GM10248 (cell line): ENCODE measurements at regions of chr3 and their contacts with region 1.

Region 1: DNA sequence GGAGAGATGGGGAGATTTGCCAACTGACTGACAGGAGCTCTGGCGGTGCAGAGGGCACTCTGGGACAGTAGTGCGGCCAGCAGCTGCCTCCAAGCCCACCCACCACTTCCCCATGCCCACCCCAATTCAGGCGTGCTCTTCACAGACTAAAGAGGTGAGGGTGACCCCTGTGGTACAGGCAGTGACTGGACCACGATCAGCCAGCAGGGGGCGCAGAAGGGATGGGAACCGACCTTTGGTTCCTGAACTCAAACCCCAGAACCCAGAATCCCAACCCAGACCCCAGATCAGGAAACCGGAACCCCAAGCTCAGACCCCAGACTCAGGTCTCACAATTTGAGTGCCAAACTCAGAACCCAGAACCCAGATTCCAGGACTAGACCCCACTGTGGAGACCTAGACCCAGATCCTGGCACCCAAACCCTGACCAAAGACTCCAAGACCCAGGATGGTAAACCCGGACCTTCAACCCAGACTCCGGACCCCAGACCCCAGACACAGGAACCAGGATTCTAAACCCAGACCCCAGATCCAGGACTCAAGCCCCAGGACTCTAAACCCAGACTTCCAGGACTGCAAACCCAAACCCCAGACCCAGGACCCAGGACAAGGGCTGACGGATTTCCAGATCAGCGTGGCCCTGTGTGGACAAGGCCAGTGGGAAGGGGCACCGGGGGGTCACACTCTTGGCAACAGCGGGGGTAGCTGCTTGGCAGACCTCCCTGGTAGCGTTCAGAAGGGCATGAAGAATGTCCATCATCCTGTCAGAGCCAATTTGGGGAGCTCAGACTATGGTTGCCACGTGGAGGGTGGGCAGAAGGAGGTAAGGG is 3.7 kb upstream of the MYL3 start:
- DNase-seq: peak; percentile 87
- CTCF ChIP-seq: peak; percentile 96

Region 2: DNA sequence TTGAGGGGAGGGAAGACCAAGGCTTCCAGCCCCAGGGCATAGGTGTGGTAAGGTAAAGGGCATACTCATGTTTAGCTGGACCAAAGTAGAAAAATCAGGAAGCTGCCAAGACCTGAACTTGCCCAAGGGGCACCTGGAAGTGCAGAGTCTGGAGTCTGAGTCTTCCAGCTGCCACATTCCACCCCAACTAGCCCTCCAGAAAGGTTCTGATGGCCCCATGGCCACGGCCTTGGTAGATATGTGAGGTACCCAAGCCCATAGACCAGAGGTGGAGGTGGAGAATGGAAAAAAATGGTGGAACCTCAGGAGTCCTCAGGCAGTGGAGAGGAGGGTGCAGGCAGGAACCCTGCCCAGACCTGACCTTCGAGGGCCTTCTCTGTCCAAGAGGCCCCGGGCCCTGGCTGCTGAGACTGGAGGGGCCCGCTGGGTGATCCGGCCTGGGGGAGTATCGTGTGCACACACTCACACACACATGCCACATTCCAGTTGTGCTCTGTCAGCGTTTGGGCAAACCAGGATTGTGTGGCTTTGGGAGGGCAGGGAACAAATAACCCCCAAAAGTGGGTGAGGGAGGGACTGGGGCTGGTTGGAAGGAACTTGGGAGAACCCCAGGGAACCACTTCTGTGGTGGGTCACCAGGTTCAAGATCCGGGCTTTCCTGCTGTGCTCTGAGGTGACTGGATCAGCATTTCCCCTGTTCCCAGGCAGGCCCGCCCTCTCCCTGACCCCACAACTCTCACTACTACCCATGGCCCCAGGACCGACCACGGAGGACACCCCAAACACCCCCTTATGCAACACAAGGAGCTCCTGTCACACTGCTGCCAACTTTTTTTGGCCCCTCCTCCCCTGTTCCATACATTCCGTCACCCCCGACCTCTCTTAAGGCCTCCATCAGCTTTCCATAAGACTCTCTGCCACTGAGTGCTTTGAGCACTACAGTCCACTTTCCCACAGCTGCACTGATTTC is 15.3 kb before region 1 on chr3:
- CTCF ChIA-PET with region 1: interaction called, 12 read pairs
- POLR2A ChIA-PET with region 1: no interaction called
- DNase-seq: no peak
- CTCF ChIP-seq: no peak

Region 3: DNA sequence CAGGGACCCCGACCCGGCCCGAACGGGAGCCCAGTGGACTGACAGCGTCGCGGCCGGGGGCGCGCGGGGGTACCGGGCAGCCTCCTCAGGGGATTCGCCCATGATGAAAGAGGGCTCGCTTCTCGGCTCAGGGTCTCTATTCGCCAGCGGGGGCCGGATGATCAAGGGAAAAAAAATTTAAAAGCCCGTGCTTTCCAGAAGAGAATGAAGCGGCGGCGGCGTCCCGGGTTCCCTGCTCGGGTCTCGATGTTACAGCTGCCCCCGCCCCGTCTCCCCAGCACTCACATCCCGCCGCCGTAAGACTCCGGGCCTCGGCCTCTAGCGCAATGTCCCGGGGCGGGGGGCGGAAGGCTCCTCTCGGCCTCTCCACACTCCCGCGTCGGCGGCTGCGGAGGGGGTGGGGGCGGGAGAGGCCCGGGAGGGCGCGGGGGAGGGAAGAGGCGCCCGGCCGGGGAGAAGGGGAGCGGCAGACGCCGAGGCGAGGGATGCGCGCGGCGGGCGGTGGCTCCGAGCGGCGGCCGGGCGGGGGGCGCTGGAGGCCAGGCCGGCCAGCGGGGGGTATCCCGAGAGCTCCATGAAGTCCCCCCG is 14.9 kb after region 1 on chr3:
- CTCF ChIA-PET with region 1: interaction called, 13 read pairs
- POLR2A ChIA-PET with region 1: no interaction called
- DNase-seq: no peak
- CTCF ChIP-seq: no peak